Activated CD4-positive, alpha-beta memory T cell treated with anti-CD3 and anti-CD28 coated beads for 36 hours (primary cell): ENCODE measurements at regions of chr5 and their contacts with region 1.

Region 1: DNA sequence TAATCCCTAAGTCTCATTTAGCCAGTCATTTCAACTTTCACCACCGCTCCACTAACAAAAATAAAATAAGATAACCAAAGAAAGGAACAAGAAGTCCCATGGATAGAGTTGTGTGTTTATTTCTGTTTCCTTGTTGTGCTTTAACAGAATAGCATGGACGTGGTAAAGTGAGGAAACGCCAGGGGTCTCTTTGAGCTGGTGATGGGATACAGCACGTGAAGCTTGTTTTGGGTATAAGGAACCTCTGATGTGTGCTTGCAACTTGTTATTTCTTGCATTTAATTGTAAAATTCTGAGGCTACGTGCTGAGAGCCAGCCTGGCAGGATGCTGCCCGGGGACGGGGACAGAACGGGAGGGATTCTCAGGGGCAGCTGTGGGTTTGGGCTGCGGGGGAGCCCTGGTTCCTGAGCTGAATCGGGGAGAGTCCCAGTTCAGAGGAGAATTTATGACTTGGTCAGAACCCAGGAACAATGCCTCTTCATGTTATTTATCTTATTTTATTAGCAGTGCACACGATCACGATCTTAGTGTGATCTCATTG is 63.4 kb downstream of the ANKRD33B start:
- DNase-seq: peak; percentile 28
- H3K4me3 Mint-ChIP-seq: peak overlapping the region; percentile 69
- H3K27ac Mint-ChIP-seq: peak overlapping the region; percentile 48
- H3K4me1 Mint-ChIP-seq: peaks cover 39% of the 10 kb centered on the region
- H3K27me3 Mint-ChIP-seq: peaks cover 6% of the 10 kb centered on the region

Region 2: GRCh38 chr5:10418654-10419345 is 208.4 kb before region 1 on chr5:
- CTCF ChIA-PET with region 1: interaction called, 17 read pairs
- POLR2A ChIA-PET with region 1: no interaction called
- intact Hi-C with region 1: no loop called
- DNase-seq: no peak
- H3K4me3 Mint-ChIP-seq: no peak overlapping the region
- H3K27ac Mint-ChIP-seq: peak overlapping the region; percentile 32
- H3K4me1 Mint-ChIP-seq: peaks cover 43% of the 10 kb centered on the region
- H3K27me3 Mint-ChIP-seq: no peaks in the 10 kb centered on the region

Region 3: DNA sequence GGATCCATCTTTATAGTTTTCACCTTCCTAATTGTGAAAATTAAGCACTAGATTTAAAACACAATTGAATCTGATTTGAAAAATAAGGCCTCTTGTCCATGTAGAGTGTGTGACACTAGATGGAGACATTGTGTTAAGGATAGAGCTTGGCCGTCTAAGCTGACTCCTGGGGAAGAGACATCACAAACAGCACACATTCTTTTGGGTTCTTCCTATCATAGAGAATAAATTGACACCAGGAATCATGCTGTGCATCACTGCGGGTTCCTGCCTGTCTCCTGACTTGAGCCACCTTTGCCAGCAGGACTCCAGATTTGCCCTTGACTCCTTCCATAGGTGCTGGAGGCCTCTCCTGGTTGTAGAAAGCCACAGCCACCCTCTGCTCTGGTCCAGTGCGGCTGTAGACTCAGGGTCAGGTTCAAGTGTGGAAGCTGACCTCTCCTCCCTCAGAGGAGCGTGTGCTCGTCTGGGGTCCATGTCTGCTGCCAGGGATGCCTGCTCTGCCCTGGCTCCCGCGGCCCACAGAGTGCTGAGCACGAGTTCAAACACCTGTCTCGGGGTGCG is 174.4 kb before region 1 on chr5:
- CTCF ChIA-PET with region 1: interaction called, 154 read pairs
- POLR2A ChIA-PET with region 1: no interaction called
- intact Hi-C with region 1: loop called (anchors 1 kb)
- DNase-seq: no peak
- H3K4me3 Mint-ChIP-seq: no peak overlapping the region
- H3K27ac Mint-ChIP-seq: no peak overlapping the region
- H3K4me1 Mint-ChIP-seq: peaks cover 5% of the 10 kb centered on the region
- H3K27me3 Mint-ChIP-seq: no peaks in the 10 kb centered on the region

Region 4: DNA sequence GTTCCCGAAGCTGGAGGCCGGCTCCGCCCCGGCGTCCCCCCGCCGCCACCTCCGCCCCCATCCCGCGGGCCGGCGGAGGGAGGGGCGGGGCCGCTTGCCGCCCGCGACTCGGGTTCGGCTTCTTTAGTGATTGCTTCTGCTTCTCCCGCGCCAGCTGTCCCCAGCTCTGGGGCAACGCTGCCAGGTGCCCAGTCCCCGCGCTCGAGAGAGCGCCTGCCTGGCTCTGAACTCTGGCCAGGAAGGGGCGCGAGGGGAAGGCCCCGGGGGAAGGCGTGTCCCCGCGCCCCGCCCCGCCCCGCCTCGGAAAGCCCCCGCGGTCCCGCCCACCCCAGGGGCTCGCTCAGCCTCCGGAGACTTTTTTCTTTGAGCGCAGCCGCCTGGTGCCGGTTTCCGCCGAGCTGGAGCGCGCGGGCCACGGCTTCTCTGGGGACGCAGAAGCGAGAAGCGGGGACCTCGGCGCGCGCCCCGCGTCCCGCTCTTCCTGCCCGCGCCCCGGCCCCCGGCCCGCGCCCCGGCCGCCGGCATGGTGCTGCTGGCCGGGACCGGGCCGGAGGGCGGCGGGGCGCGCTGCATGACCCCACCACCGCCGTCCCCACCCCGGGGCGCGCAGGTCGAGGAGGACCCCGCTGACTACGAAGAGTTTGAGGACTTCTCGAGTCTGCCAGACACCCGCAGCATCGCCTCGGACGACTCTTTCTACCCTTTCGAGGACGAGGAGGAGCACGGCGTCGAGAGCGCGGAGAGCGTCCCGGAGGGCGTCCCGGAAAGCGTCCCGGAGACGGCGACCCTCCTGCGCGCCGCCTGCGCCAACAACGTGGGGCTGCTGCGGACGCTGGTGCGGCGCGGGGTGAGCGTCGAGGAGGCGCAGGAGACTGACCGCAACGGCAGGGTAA is 63.0 kb before region 1 on chr5 and contains the start of gene ANKRD33B:
- CTCF ChIA-PET with region 1: interaction called, 8 read pairs
- POLR2A ChIA-PET with region 1: interaction called, 3 read pairs
- intact Hi-C with region 1: loop called (anchors 1 kb)
- DNase-seq: peak; percentile 88
- H3K4me3 Mint-ChIP-seq: peak within 1 kb of the TSS; percentile 84
- H3K27ac Mint-ChIP-seq: peak within 1 kb of the TSS; percentile 79
- H3K4me1 Mint-ChIP-seq: peaks cover 21% of the 10 kb centered on the region
- H3K27me3 Mint-ChIP-seq: peaks cover 3% of the 10 kb centered on the region
- total RNA-seq, gene ANKRD33B: 9.9 to 10.0 TPM

Region 5: GRCh38 chr5:10595678-10596309 is 31.4 kb before region 1 on chr5:
- CTCF ChIA-PET with region 1: interaction called, 18 read pairs
- POLR2A ChIA-PET with region 1: interaction called, 3 read pairs
- intact Hi-C with region 1: no loop called
- DNase-seq: peak; percentile 77
- H3K4me3 Mint-ChIP-seq: no peak overlapping the region
- H3K27ac Mint-ChIP-seq: peak overlapping the region; percentile 50
- H3K4me1 Mint-ChIP-seq: peaks cover 48% of the 10 kb centered on the region
- H3K27me3 Mint-ChIP-seq: no peaks in the 10 kb centered on the region

Region 6: GRCh38 chr5:10607666-10608073 is 19.6 kb before region 1 on chr5:
- CTCF ChIA-PET with region 1: interaction called, 24 read pairs
- POLR2A ChIA-PET with region 1: no interaction called
- intact Hi-C with region 1: no loop called
- DNase-seq: no peak
- H3K4me3 Mint-ChIP-seq: no peak overlapping the region
- H3K27ac Mint-ChIP-seq: no peak overlapping the region
- H3K4me1 Mint-ChIP-seq: peaks cover 14% of the 10 kb centered on the region
- H3K27me3 Mint-ChIP-seq: peaks cover 5% of the 10 kb centered on the region

Region 7: DNA sequence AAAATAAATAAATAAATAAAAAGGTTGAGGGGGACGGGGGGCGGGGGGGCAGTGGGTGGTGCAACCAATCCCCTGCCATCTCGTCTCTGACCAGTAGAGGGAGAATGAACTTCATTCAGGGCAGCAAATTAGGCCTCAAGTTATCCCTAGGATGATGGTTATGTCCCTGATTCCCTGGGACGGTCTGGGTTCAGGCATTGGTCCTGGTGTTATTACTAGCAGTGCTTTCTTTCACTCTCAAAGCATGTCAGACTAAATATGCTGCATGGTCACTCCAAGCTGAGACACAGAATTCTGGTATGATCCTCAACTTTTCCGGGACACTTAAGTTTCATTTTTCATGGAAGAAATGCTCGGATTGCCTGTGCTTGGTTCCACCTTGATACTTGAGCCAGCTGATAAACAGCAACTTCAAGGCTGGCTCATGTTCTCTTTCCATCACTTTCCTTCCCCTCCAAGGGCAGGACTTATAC is 74.4 kb after region 1 on chr5:
- CTCF ChIA-PET with region 1: interaction called, 10 read pairs
- POLR2A ChIA-PET with region 1: no interaction called
- intact Hi-C with region 1: loop called (anchors 5 kb)
- DNase-seq: peak; percentile 27
- H3K4me3 Mint-ChIP-seq: no peak overlapping the region
- H3K27ac Mint-ChIP-seq: no peak overlapping the region
- H3K4me1 Mint-ChIP-seq: peaks cover 38% of the 10 kb centered on the region
- H3K27me3 Mint-ChIP-seq: no peaks in the 10 kb centered on the region